CD8-positive, alpha-beta T cell (primary cell): ENCODE measurements at regions of chr20 and their contacts with region 1.

Region 1: DNA sequence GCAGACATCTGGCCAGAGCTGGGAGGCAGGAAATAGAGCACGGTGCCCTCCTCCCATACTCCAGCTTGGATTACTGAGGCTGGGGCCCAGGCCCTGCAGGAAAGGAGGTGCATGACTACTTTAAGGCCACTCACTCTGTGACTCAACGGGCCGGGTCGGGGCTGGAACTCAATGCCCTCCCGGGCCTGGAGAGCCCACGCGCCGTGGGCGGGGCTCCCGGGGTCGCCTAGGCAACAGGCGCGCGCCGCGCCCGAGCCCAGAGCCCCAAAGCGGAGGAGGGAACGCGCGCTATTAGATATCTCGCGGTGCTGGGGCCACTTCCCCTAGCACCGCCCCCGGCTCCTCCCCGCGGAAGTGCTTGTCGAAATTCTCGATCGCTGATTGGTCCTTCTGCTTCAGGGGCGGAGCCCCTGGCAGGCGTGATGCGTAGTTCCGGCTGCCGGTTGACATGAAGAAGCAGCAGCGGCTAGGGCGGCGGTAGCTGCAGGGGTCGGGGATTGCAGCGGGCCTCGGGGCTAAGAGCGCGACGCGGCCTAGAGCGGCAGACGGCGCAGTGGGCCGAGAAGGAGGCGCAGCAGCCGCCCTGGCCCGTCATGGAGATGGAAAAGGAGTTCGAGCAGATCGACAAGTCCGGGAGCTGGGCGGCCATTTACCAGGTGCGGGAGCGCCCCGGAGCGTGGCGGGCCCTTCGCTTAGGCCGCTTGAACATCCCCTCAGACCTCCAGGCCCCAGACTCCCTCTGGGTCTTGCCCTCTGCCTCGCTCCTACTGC is at the start of gene PTPN1:
- DNase-seq: peak; percentile 97 to 99 (median 99)
- ATAC-seq: peak; percentile 95
- H3K4me3 ChIP-seq: peak within 1 kb of the TSS; percentile 80 to 100
- H3K4me3 Mint-ChIP-seq: peak within 1 kb of the TSS; percentile 95
- H3K27ac ChIP-seq: peak within 1 kb of the TSS; percentile 91 to 94
- H3K27ac Mint-ChIP-seq: peak within 1 kb of the TSS; percentile 99
- H3K4me1 ChIP-seq: peaks cover 45% of the 10 kb centered on the region
- H3K4me1 Mint-ChIP-seq: peaks cover 52% of the 10 kb centered on the region
- H3K27me3 ChIP-seq: no peaks in the 10 kb centered on the region
- H3K27me3 Mint-ChIP-seq: no peaks in the 10 kb centered on the region
- CTCF ChIP-seq: no peak
- total RNA-seq, gene PTPN1: 96.0 to 97.5 TPM

Region 2: GRCh38 chr20:49982346-49983122 is 527.6 kb before region 1 on chr20 and contains the start of gene SNAI1:
- CTCF ChIA-PET with region 1: no interaction called
- POLR2A ChIA-PET with region 1: no interaction called
- intact Hi-C with region 1: loop called in 1 of 2 experiments (anchors 2 kb)
- DNase-seq: peak; percentile 65 to 94 (median 82)
- ATAC-seq: peak; percentile 92
- H3K4me3 ChIP-seq: peak within 1 kb of the TSS; percentile 35 to 51
- H3K4me3 Mint-ChIP-seq: peak within 1 kb of the TSS; percentile 72
- H3K27ac ChIP-seq: peak within 1 kb of the TSS in 1 of 2 experiments; percentile 51
- H3K27ac Mint-ChIP-seq: peak within 1 kb of the TSS; percentile 79
- H3K4me1 ChIP-seq: peaks cover 24% of the 10 kb centered on the region
- H3K4me1 Mint-ChIP-seq: peaks cover 28% of the 10 kb centered on the region
- H3K27me3 ChIP-seq: no peaks in the 10 kb centered on the region
- H3K27me3 Mint-ChIP-seq: no peaks in the 10 kb centered on the region
- CTCF ChIP-seq: peak; percentile 55
- total RNA-seq, gene SNAI1: 3.0 to 3.1 TPM

Region 3: GRCh38 chr20:50450881-50451752 is 59.0 kb before region 1 on chr20:
- CTCF ChIA-PET with region 1: no interaction called
- POLR2A ChIA-PET with region 1: no interaction called
- intact Hi-C with region 1: no loop called
- DNase-seq: peak in 6 of 9 experiments; percentile 10 to 64 (median 30)
- ATAC-seq: peak; percentile 75
- H3K4me3 ChIP-seq: no peak overlapping the region
- H3K4me3 Mint-ChIP-seq: no peak overlapping the region
- H3K27ac ChIP-seq: no peak overlapping the region
- H3K27ac Mint-ChIP-seq: no peak overlapping the region
- H3K4me1 ChIP-seq: peaks cover 16% of the 10 kb centered on the region
- H3K4me1 Mint-ChIP-seq: peaks cover 12% of the 10 kb centered on the region
- H3K27me3 ChIP-seq: peaks cover 0 to 5% of the 10 kb centered on the region in 2 experiments
- H3K27me3 Mint-ChIP-seq: peaks cover 15% of the 10 kb centered on the region
- CTCF ChIP-seq: no peak

Region 4: DNA sequence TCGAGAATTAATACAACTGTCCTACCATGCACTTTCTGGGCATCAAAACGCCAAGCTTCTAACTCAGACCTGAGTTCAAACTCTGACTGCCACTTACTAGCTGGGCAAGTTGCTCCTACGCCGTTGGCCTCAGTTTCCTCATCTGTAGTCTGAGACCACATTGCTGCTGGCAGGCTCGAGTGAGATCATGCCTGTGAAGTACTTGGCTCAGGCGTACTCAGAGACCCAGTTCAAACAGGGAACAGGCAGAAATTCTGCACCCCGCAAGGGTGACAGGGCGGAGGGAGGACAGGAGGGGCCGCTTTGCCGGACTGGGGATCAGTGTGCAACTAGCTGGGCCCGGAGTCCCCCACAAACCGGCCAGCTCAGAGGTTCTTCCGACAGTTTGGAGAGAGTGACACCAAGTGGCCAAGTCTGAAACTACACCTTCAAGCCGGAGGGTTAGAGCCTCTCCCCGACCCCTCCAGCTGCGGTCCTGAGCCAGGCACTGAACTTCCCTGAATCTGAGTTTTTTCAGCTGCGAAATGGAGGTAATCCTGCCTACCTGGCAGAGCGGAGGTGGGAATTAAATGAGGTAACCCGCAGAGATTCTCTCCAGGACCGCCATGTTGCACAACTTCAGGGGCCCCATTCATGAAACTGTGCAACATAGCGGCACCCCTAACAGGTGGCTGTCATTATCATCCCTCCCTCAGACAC is 45.9 kb before region 1 on chr20:
- CTCF ChIA-PET with region 1: no interaction called
- POLR2A ChIA-PET with region 1: no interaction called
- intact Hi-C with region 1: no loop called
- DNase-seq: peak; percentile 39 to 78 (median 58)
- ATAC-seq: peak; percentile 83
- H3K4me3 ChIP-seq: no peak overlapping the region
- H3K4me3 Mint-ChIP-seq: no peak overlapping the region
- H3K27ac ChIP-seq: no peak overlapping the region
- H3K27ac Mint-ChIP-seq: no peak overlapping the region
- H3K4me1 ChIP-seq: peaks cover 3% of the 10 kb centered on the region
- H3K4me1 Mint-ChIP-seq: peaks cover 4% of the 10 kb centered on the region
- H3K27me3 ChIP-seq: peaks cover 0 to 2% of the 10 kb centered on the region in 2 experiments
- H3K27me3 Mint-ChIP-seq: peaks cover 2% of the 10 kb centered on the region
- CTCF ChIP-seq: peak; percentile 83

Region 5: DNA sequence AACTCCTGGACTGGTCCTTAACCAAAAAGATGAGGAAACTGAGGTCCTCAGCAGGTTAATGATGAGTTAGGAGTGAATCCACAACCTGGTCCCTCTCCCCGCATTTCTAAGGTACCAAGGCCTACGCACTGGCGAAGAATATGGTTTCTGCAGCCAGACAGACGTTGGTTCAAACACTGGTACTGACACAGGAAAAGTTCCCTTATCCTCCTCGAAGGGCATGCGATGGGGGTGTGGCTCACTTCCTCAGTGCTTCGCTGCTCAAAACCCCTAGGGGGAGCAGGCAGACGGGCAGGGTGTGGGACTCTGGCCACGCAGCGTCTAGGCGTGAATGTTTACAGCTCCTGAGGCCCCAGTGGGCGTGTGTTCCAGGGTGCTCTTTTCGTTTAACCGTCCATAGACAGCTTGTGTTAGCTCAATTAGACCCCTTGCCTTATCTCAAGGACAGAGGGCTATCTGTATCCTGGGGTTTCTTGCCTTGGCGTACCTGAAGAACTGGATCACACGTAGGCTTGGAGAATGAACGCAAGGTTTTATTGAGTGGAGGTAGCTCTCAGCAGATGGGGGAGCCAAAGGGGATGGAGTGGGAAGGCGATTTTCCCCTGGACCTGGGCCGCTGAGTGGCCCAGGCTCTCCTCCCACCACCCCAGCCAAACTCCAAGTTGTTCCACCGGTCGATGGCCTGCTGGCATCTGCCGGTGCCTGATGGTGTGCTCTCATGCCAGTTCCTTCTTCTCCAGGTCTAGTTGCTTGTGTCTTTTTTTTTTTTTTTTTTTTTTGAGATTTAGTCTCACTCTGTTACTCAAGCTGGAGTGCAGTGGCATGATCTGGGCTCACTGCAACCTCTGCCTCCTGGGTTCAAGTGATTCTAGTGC is 31.7 kb before region 1 on chr20:
- CTCF ChIA-PET with region 1: interaction called, 3 read pairs
- POLR2A ChIA-PET with region 1: interaction called, 10 read pairs
- intact Hi-C with region 1: loop called in 1 of 2 experiments (anchors 1 kb)
- DNase-seq: peak; percentile 51 to 85 (median 75)
- ATAC-seq: peak; percentile 100
- H3K4me3 ChIP-seq: no peak overlapping the region
- H3K4me3 Mint-ChIP-seq: no peak overlapping the region
- H3K27ac ChIP-seq: no peak overlapping the region
- H3K27ac Mint-ChIP-seq: no peak overlapping the region
- H3K4me1 ChIP-seq: peaks cover 13% of the 10 kb centered on the region
- H3K4me1 Mint-ChIP-seq: peaks cover 16% of the 10 kb centered on the region
- H3K27me3 ChIP-seq: no peaks in the 10 kb centered on the region
- H3K27me3 Mint-ChIP-seq: no peaks in the 10 kb centered on the region
- CTCF ChIP-seq: peak; percentile 69

Region 6: DNA sequence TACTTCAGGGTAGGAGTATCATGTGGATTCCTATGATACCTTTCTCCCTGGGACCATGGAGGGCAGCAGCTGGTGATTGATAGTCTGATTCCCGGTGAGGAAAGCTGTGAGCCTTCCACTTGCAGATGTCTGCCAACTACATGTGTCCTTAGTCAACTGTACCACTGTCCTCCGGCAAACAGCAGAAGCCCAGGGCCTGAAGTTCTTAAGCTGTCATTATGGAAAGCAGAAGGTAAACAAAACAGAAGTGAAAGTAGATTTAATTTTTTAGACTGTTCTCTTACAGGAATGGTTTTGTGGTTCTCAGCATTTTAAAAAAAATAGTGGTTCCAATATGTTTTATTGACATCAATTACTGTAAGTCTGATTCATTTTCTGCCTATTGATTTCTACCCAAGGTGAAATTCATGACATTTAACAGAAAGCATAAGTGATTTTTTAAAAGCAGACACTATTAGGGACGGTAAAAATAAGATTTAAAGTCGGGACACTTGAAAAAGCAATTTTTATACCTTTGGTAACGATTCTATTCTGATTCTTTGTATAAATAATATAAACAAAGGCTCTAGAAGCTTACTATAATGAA is 36.7 kb after region 1 on chr20:
- CTCF ChIA-PET with region 1: no interaction called
- POLR2A ChIA-PET with region 1: interaction called, 8 read pairs
- intact Hi-C with region 1: loop called in 1 of 2 experiments (anchors 5 kb)
- DNase-seq: peak in 1 of 9 experiments; percentile 31
- ATAC-seq: peak; percentile 52
- H3K4me3 ChIP-seq: peak overlapping the region in 1 of 2 experiments; percentile 0
- H3K4me3 Mint-ChIP-seq: peak overlapping the region; percentile 68
- H3K27ac ChIP-seq: peak overlapping the region in 1 of 2 experiments; percentile 45
- H3K27ac Mint-ChIP-seq: peak overlapping the region; percentile 78
- H3K4me1 ChIP-seq: peaks cover 40% of the 10 kb centered on the region
- H3K4me1 Mint-ChIP-seq: peaks cover 75% of the 10 kb centered on the region
- H3K27me3 ChIP-seq: no peaks in the 10 kb centered on the region
- H3K27me3 Mint-ChIP-seq: no peaks in the 10 kb centered on the region
- CTCF ChIP-seq: no peak

Region 7: DNA sequence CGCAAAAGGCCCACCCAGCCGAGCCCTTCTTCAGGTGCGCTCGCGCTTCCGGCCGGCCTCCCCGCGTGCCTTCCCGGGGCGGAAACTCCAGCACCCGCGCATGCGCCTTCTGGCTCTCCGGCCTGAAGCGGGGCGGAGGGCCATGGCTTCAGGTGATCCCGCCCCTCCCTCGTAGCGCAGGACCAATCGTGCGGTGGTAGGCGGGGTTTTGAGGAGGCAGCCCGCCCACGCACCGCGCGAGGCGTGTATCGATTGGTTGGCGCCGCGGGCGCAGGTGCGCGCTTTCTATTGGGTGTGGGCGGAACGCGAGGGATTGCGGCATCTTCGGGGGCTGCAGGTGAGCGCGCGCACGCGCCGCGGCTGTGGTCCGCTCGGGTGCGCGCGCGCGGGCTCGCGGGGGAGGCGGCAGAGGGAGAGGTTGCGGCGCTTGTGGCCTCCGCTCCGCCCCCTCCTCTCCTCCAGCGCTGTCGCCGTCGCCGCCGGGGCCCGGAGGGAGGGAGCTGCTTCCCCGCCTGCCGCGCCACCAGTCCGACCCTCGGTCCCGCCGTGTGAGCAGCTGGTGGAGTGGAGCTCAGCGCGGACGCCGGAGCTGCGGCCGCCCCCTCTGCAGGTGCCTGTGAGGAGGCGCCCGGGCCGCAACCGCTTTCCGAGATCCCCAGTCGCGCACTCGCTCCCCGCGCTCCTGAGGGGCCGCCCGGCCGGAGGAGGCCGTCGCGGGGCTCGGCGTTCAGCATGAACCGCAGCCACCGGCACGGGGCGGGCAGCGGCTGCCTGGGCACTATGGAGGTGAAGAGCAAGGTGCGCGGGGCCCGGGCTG is 221.1 kb after region 1 on chr20 and contains the start of gene PARD6B:
- CTCF ChIA-PET with region 1: no interaction called
- POLR2A ChIA-PET with region 1: no interaction called
- intact Hi-C with region 1: loop called (anchors 1 kb)
- DNase-seq: peak; percentile 98 to 100 (median 99)
- ATAC-seq: peak; percentile 96
- H3K4me3 ChIP-seq: peak within 1 kb of the TSS; percentile 72 to 81
- H3K4me3 Mint-ChIP-seq: peak within 1 kb of the TSS; percentile 91
- H3K27ac ChIP-seq: peak within 1 kb of the TSS; percentile 51 to 54
- H3K27ac Mint-ChIP-seq: peak within 1 kb of the TSS; percentile 86
- H3K4me1 ChIP-seq: peaks cover 16% of the 10 kb centered on the region
- H3K4me1 Mint-ChIP-seq: peaks cover 34% of the 10 kb centered on the region
- H3K27me3 ChIP-seq: no peaks in the 10 kb centered on the region
- H3K27me3 Mint-ChIP-seq: no peaks in the 10 kb centered on the region
- CTCF ChIP-seq: no peak
- total RNA-seq, gene PARD6B: 5.6 to 6.3 TPM